Posterior vena cava (tissue), 2 donors: ENCODE measurements at regions of chr17 and their contacts with region 1.

Region 1: GRCh38 chr17:30278032-30278431 is 13.7 kb downstream of the BLMH start:
- DNase-seq: no peak

Region 2: GRCh38 chr17:30124273-30124796 is 153.7 kb before region 1 on chr17:
- intact Hi-C with region 1: loop called in 1 of 2 experiments (anchors 10 kb)
- DNase-seq: no peak

Region 3: GRCh38 chr17:30263552-30264333 is 14.3 kb before region 1 on chr17:
- intact Hi-C with region 1: no loop called
- DNase-seq: no peak

Region 4: GRCh38 chr17:30336369-30337171 is 58.5 kb after region 1 on chr17:
- intact Hi-C with region 1: no loop called
- DNase-seq: no peak

Region 5: DNA sequence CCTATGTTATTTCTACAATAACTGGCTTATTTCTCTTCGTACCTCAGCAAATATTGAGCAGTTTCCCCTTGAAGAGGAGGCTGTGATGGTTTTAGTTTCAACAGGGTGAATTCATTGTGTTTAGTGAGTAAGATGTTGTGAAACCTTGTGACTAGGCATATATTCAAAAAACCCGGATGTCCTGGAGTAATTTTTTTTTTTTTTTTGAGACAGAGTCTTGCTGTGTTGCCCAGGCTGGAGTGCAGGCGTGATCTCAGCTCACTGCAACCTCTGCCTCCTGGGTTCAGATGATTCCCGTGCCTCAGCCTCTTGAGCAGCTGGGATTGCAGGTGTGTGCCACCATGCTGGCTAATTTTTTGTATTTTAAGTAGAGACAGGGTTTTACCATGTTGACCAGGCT is 111.8 kb after region 1 on chr17:
- intact Hi-C with region 1: no loop called
- DNase-seq: no peak

Region 6: GRCh38 chr17:30921544-30922196 is 643.6 kb after region 1 on chr17 and contains the start of gene ADAP2:
- intact Hi-C with region 1: no loop called
- DNase-seq: peak; percentile 88
- total RNA-seq, gene ADAP2: 18.8 to 28.1 TPM